Caco-2 (cell line): ENCODE measurements at regions of chr4 and their contacts with region 1.

Region 1: DNA sequence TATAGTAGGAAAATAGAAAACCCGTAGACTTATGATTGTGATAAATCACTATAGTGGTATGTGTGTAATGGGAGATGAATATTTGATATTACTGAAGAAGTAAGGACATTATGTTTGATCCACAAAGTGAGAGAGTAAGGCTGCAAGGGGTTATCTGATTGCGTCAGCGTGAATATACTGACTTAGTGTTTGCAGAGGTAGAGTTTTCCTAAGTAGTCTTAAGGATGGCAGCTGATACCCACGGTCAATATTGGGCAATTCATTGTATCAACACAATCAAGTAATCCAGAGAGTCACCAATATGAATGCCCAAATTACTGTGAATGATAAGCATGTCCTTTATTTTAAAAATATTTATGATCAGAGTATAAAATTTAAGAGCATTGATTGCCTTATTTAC is 83.7 kb downstream of the SPOCK3 start:
- DNase-seq: no peak
- H3K4me3 ChIP-seq: no peak overlapping the region
- H3K4me3 Mint-ChIP-seq: no peak overlapping the region
- H3K27ac Mint-ChIP-seq: no peak overlapping the region
- H3K4me1 ChIP-seq: no peaks in the 10 kb centered on the region
- H3K4me1 Mint-ChIP-seq: no peaks in the 10 kb centered on the region
- H3K27me3 ChIP-seq: no peaks in the 10 kb centered on the region
- H3K27me3 Mint-ChIP-seq: peaks cover 4% of the 10 kb centered on the region
- CTCF ChIP-seq: no peak

Region 2: DNA sequence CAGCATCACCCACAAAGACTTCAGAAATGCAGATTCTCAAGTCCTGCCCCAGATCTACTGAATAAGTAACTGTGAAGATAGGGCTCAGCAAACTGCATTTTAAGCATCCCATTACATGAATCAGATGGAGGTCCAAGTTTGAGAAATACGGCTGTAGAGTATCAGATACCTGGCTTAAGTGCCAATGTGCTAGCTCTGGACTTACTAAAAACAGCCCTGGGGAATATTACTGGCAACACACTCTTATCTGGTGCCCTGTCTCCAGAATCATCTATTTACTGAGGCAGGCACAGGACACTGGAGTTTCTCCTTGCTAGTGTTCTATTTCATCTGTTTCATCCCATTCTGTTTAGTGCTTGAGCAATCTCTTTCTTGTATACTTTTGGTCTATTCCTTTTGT is 21.4 kb before region 1 on chr4:
- CTCF ChIA-PET with region 1: no interaction called
- POLR2A ChIA-PET with region 1: no interaction called
- intact Hi-C with region 1: loop called (anchors 1 kb)
- DNase-seq: no peak
- H3K4me3 ChIP-seq: no peak overlapping the region
- H3K4me3 Mint-ChIP-seq: no peak overlapping the region
- H3K27ac Mint-ChIP-seq: no peak overlapping the region
- H3K4me1 ChIP-seq: no peaks in the 10 kb centered on the region
- H3K4me1 Mint-ChIP-seq: no peaks in the 10 kb centered on the region
- H3K27me3 ChIP-seq: no peaks in the 10 kb centered on the region
- H3K27me3 Mint-ChIP-seq: no peaks in the 10 kb centered on the region
- CTCF ChIP-seq: no peak

Region 3: DNA sequence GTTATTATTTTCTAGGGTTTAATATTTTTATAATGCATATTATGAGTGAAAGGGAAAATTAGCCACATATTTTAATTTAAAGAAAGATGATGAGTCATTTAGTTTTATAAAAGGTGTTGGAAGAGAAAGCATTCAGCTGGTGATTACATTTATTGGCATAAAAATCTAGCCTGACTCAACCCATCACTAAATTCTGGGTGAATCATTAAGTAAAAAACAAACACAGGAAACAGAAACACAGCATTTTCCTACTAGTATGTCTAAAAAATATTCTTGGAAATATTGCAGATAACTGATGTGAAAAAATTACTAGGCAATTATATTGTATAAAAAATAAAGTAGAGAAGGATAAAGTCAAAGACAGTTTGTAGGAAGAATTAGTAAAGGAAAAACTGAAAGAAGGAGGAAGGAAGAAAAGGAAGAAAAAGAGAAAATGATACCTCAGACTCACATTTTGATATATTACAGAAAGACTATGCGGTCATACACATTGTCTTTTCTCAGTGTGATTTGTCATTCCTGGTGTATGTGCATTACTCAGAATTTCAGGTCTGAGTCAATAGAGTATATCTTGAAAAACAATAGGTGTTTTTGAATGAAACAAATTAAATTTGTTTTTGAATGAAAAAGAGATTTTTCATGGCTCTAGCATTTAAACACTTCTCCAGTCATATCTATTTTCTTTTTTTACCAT is 131.7 kb after region 1 on chr4:
- CTCF ChIA-PET with region 1: no interaction called
- POLR2A ChIA-PET with region 1: no interaction called
- intact Hi-C with region 1: no loop called
- DNase-seq: no peak
- H3K4me3 ChIP-seq: no peak overlapping the region
- H3K4me3 Mint-ChIP-seq: no peak overlapping the region
- H3K27ac Mint-ChIP-seq: no peak overlapping the region
- H3K4me1 ChIP-seq: no peaks in the 10 kb centered on the region
- H3K4me1 Mint-ChIP-seq: no peaks in the 10 kb centered on the region
- H3K27me3 ChIP-seq: no peaks in the 10 kb centered on the region
- H3K27me3 Mint-ChIP-seq: no peaks in the 10 kb centered on the region
- CTCF ChIP-seq: no peak

Region 4: DNA sequence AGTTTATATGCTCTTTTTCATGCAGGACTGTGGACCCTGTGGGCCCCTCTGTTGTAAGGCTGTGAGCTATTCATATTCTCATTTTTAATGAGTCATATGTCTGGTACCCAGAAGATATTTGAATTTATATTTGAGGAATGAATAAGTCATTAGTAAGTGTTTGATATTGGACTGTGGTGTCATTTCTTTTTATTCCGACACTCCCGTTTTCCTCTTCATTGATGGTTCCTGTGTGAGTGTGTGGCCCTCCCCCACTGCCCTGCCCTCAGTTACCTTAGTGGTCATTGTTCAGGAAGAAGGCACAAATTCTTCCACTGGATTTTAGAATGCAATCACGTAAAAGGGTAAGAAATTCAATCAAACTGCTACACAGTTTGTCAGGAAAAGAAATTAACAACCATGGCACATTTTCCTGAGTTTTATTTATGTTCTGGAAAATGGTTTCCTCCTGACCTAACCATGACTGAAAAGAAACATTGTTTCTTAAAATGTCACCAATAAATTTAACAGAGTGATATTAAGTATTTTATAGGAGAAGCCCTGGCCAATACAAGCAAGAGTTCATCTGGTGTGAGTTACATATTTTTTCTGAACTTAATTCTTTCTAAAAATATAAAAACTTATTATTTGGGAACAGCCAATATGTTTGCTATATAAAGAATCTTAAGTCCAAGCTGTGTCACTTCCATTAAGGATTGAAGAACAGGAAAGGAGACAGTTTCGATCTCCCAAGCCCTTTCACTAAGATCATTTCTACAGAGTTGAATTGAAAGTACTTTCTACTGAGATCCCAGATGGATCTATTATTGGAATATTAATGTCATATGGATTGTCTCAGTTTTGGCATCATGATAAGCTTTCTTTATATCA is 571.3 kb after region 1 on chr4:
- CTCF ChIA-PET with region 1: no interaction called
- POLR2A ChIA-PET with region 1: no interaction called
- intact Hi-C with region 1: loop called (anchors 5 kb)
- DNase-seq: no peak
- H3K4me3 ChIP-seq: no peak overlapping the region
- H3K4me3 Mint-ChIP-seq: no peak overlapping the region
- H3K27ac Mint-ChIP-seq: no peak overlapping the region
- H3K4me1 ChIP-seq: no peaks in the 10 kb centered on the region
- H3K4me1 Mint-ChIP-seq: no peaks in the 10 kb centered on the region
- H3K27me3 ChIP-seq: no peaks in the 10 kb centered on the region; the same call in 1 of the 2 replicates
- H3K27me3 Mint-ChIP-seq: no peaks in the 10 kb centered on the region
- CTCF ChIP-seq: no peak